Activated B cell treated with CpG ODN at 0.5 μM for 24 hours (primary cell): ENCODE measurements at regions of chr14 and their contacts with region 1.

Region 1: DNA sequence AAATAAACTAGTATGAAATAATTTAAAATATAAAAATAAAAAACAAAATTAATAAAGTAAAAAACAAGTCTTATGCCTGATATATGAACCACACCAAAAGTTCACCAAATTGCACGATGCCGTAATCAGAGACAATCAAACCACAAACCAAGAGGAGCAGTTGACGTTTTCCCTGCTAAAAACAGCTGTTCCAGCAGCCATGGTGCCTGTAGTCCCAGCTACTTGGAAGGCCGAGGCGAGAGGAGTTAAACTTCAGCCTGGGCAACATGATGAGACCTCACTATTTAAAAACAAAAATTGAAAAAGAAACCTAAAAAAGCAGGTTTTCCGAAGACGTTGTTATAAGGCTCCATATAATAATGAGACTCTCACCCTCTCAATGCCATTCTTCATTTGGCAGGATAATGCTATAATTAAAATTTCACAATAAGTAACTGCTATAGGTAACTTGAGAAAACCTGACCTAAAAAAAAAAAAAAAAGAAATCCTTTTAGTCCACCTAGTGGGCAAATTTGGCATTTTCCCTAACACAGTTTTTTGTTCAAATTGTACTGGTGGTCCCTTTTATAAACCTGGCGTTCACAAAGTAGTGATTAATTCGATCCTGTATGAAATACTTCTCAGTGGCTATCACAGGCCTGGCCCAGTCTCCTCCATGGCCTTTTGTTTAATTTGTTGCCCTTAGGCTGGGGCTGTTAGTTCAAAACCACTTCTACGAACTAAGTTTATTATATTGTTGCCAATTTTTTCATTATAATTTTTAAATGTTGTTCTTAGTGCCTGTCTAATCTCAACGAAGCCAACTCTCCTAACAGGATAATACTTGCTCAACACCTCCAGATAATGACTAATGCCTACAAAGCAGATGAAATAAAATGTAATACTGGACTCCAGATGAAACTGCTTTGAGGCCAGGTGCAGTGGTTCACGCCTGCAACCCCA is 62.1 kb downstream of the TNFAIP2 start:
- DNase-seq: no peak
- ATAC-seq: peak; percentile 28
- H3K4me3 Mint-ChIP-seq: no peak overlapping the region
- H3K27ac Mint-ChIP-seq: no peak overlapping the region
- H3K4me1 Mint-ChIP-seq: peaks cover 7% of the 10 kb centered on the region
- H3K27me3 Mint-ChIP-seq: peaks cover 40% of the 10 kb centered on the region
- CTCF ChIP-seq: peak; percentile 61

Region 2: DNA sequence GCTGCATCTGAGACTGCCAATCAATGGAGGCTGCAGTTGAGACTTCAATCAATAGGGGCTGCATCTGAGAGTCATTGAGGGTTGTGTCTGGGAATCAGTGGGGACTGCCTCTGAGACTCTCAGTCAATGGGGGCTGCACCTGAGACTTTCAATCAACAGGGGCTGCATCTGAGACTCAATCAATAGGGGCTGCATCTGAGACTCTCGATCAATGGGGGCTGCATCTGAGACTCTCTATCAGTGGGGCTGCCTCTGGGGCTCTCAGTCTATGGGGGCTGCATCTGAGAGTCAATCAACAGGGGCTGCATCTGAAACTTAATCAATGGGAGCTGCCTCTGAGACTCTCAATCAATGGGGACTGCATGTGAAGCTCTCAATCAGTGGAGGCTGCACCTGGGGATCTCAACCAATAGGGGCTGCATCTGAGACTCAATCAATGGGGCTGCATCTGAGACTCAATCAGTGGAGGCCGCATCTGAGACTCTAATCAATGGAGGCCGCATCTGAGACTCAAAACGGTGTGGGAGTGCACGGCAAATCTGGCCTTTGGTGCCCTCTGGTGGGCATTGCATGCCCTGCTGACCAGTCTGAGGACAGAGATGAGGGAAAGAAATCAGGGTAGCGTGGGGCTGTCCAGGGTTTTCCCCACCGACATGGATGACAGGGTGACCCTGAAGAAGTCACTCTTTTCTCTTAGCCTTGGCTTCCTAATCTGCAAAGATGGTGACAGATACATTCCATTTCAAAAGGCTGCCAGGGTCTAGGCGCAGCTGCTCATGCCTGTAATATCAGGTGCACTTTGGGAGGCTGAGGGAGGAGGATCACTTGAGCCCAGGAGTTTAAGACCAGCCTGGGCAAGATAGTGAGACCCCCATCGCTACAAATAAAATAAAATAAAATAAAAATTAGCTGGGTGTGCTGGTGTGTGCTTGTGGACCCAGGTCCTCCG is 107.4 kb after region 1 on chr14:
- CTCF ChIA-PET with region 1: interaction called, 3 read pairs
- POLR2A ChIA-PET with region 1: no interaction called
- intact Hi-C with region 1: loop called (anchors 5 kb)
- DNase-seq: peak; percentile 73
- ATAC-seq: peak; percentile 99
- H3K4me3 Mint-ChIP-seq: no peak overlapping the region
- H3K27ac Mint-ChIP-seq: no peak overlapping the region
- H3K4me1 Mint-ChIP-seq: peaks cover 6% of the 10 kb centered on the region
- H3K27me3 Mint-ChIP-seq: peaks cover 18% of the 10 kb centered on the region
- CTCF ChIP-seq: peak; percentile 24

Region 3: GRCh38 chr14:103782376-103782775 is 597.1 kb after region 1 on chr14:
- CTCF ChIA-PET with region 1: no interaction called
- POLR2A ChIA-PET with region 1: no interaction called
- intact Hi-C with region 1: no loop called
- DNase-seq: no peak
- ATAC-seq: no peak
- H3K4me3 Mint-ChIP-seq: no peak overlapping the region
- H3K27ac Mint-ChIP-seq: no peak overlapping the region
- H3K4me1 Mint-ChIP-seq: no peaks in the 10 kb centered on the region
- H3K27me3 Mint-ChIP-seq: no peaks in the 10 kb centered on the region
- CTCF ChIP-seq: no peak